ENCODE measurements at regions of chr17 and their contacts with region 1.

Region 1: DNA sequence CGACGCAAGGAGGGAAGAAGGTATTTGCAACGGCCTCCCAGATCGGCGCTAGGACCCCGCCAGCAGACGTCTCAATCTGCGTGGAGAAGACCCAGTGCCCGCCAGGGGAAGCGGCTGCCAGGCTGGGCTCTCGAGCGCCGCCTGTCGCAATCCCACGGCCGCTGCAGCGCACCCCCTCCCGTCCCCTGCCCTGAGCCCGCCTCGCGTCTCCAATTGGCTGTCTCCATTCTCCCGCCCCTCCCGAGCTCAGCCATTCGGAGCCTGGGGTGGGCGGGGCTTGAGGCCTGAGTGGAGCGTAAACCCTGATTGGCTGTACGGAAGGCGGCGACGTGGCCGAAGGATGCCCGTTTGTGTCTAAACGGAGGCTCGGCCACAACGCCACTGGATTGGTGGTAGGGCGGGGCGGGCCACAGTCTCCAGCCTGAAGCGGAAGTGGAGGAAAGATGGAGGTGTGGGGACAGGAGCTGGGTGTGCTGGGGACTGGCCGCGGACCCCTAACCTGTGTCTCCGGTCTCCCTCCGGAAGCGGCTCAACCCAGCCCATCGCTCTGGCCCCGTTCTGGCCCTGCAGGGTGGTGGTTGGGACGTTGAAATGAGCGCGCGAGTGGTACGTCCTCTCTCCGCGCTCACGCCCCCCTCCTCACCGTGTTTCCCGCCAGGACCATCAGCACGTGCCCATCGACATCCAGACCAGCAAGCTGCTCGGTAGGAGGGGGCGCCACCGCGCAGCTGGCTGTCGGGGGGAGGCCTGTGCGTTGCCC is at the start of gene CDK5RAP3:
- DNase-seq: peak; percentile 100
- H3K4me3 Mint-ChIP-seq: peak within 1 kb of the TSS; percentile 89
- H3K27ac Mint-ChIP-seq: peak within 1 kb of the TSS; percentile 93
- H3K4me1 Mint-ChIP-seq: peaks cover 31% of the 10 kb centered on the region
- H3K27me3 Mint-ChIP-seq: peaks cover 2% of the 10 kb centered on the region
- total RNA-seq, gene CDK5RAP3: 190 and 200 TPM in 2 replicates

Region 2: DNA sequence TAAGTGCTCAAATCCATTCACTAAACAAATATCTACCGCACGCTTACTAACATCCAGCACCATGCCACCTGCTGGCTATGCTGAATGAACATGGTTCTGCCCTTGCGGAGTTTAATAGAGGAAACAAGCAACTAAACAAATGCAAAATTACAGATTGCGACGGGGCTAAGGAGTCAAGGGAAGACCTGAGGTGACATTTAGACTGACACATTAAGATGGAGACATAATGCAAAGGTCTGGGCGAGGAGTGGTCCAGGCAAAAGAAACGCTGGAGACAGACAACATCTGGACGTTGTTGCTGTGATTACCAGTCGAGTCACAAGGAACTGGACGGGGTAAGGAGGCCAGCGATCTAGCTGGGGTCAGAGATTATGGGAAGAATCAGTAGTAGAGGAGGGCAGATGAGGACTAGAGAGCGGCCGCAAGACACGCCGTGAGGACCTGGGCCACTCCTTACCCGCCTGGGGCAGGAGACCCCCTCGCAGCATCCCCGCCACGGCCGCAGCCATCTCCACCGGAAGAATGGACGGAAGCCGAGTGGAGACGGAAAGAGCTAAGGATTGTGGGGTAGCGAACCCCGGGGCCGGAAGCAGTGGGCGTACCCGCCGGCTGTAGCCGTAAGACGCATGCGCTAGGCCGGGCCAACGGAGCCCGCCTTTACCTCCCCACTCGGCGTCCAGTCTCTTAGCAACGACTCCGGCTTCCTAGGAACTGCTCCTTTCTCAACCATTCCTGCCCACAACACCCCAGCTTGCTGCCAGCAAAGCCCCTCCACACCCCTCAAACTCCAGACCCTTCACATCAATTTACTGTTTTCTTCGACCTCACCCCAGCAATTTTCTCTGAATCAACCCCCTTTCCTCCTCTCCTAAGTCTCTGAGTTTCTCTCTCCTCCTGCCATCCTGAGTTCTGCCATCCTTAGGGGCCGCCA is 139.6 kb before region 1 on chr17 and contains the starts of genes LRRC46 and MRPL10:
- intact Hi-C with region 1: loop called (anchors 2 kb)
- DNase-seq: peak; percentile 92
- H3K4me3 Mint-ChIP-seq: peak within 1 kb of the TSS; percentile 90
- H3K27ac Mint-ChIP-seq: peak within 1 kb of the TSS; percentile 88
- H3K4me1 Mint-ChIP-seq: peaks cover 43% of the 10 kb centered on the region
- H3K27me3 Mint-ChIP-seq: peaks cover 1% of the 10 kb centered on the region
- total RNA-seq, gene LRRC46: 0.39 and 0.70 TPM in 2 replicates
- total RNA-seq, gene MRPL10: 53.6 and 56.9 TPM in 2 replicates

Region 3: GRCh38 chr17:47949136-47949759 is 21.6 kb before region 1 on chr17:
- intact Hi-C with region 1: loop called (anchors 1 kb)
- DNase-seq: peak; percentile 76
- H3K4me3 Mint-ChIP-seq: peak overlapping the region; percentile 70
- H3K27ac Mint-ChIP-seq: peak overlapping the region; percentile 76
- H3K4me1 Mint-ChIP-seq: peaks cover 41% of the 10 kb centered on the region
- H3K27me3 Mint-ChIP-seq: no peaks in the 10 kb centered on the region